Activated CD4-positive, alpha-beta T cell treated with anti-CD3 and anti-CD28 coated beads, Interleukin-2, amount 10 ng/mL, durations not matched to agents 24 days and 14 days (primary cell): ENCODE measurements at regions of chr1 and their contacts with region 1.

Region 1: GRCh38 chr1:212678456-212679410 is 20.9 kb downstream of the BATF3 start:
- DNase-seq: no peak
- H3K4me3 Mint-ChIP-seq: no peak overlapping the region
- H3K27ac Mint-ChIP-seq: peak overlapping the region; percentile 84
- H3K4me1 Mint-ChIP-seq: peaks cover 53% of the 10 kb centered on the region
- H3K27me3 Mint-ChIP-seq: peaks cover 2% of the 10 kb centered on the region

Region 2: GRCh38 chr1:212566522-212567479 is 111.9 kb before region 1 on chr1:
- intact Hi-C with region 1: loop called (anchors 1 kb)
- DNase-seq: peak; percentile 86
- H3K4me3 Mint-ChIP-seq: peak overlapping the region; percentile 81
- H3K27ac Mint-ChIP-seq: peak overlapping the region; percentile 89
- H3K4me1 Mint-ChIP-seq: peaks cover 27% of the 10 kb centered on the region
- H3K27me3 Mint-ChIP-seq: peaks cover 35% of the 10 kb centered on the region

Region 3: DNA sequence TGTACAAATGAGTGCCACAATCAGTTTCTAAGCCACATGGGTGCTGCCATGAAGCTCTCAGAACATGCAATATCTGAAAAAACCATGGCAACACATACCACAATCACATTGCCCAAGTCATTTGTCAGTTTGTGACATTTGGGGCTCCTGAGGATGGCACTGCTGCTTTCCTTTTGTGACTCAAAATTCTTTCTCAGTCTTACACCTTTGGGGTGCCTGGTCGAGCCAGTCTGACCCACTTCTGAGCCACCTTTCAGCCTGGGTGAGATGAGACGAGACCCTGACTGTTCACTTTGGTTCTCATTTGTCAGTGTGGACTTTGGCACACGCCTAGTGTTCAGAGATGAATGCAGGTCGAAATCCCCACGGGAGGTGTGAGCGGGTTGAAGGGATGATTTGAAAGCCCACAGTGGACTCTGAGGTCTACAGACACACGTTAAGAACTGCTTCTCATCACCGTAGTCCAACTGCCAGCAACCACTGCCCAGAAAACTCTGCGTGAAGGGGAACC is 12.9 kb after region 1 on chr1:
- intact Hi-C with region 1: no loop called
- DNase-seq: no peak
- H3K4me3 Mint-ChIP-seq: no peak overlapping the region
- H3K27ac Mint-ChIP-seq: peak overlapping the region; percentile 21
- H3K4me1 Mint-ChIP-seq: peaks cover 8% of the 10 kb centered on the region
- H3K27me3 Mint-ChIP-seq: peaks cover 3% of the 10 kb centered on the region

Region 4: GRCh38 chr1:212712451-212713303 is 33.9 kb after region 1 on chr1:
- intact Hi-C with region 1: loop called (anchors 2 kb)
- DNase-seq: no peak
- H3K4me3 Mint-ChIP-seq: no peak overlapping the region
- H3K27ac Mint-ChIP-seq: peak overlapping the region; percentile 56
- H3K4me1 Mint-ChIP-seq: peaks cover 26% of the 10 kb centered on the region
- H3K27me3 Mint-ChIP-seq: peaks cover 9% of the 10 kb centered on the region

Region 5: GRCh38 chr1:212721388-212722247 is 42.9 kb after region 1 on chr1:
- intact Hi-C with region 1: loop called (anchors 1 kb)
- DNase-seq: peak; percentile 83
- H3K4me3 Mint-ChIP-seq: peak overlapping the region; percentile 69
- H3K27ac Mint-ChIP-seq: peak overlapping the region; percentile 78
- H3K4me1 Mint-ChIP-seq: peaks cover 34% of the 10 kb centered on the region
- H3K27me3 Mint-ChIP-seq: peaks cover 14% of the 10 kb centered on the region